MCF 10A (cell line): ENCODE measurements at regions of chr3 and their contacts with region 1.

Region 1: GRCh38 chr3:8111069-8111798 is 390.4 kb upstream of the LMCD1 start:
- DNase-seq: peak; percentile 72
- H3K4me3 Mint-ChIP-seq: no peak overlapping the region
- H3K27ac Mint-ChIP-seq: no peak overlapping the region
- H3K4me1 Mint-ChIP-seq: peaks cover 6% of the 10 kb centered on the region
- H3K27me3 Mint-ChIP-seq: no peaks in the 10 kb centered on the region
- CTCF ChIP-seq: peak; percentile 87

Region 2: DNA sequence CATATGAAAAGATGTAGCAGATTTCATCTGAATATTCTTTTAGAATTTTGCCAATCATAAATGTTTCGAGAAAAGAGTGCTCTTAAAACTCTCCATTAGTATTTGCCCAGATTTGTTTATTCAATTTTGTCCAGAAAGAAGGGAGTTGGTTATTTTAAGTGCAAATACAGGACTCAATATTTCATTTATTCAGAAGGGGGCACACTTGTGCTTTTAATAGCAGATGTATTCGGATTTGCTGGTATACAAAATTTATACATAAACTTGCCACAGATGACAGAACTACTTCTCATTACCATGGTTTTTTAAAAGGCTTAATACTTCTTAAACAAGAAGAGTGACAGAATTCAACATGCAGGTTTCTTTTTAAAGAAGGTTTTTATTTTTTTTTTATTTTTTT is 1320.1 kb before region 1 on chr3:
- CTCF ChIA-PET with region 1: no interaction called
- POLR2A ChIA-PET with region 1: no interaction called
- intact Hi-C with region 1: loop called (anchors 5 kb)
- DNase-seq: no peak
- H3K4me3 Mint-ChIP-seq: no peak overlapping the region
- H3K27ac Mint-ChIP-seq: no peak overlapping the region
- H3K4me1 Mint-ChIP-seq: no peaks in the 10 kb centered on the region
- H3K27me3 Mint-ChIP-seq: no peaks in the 10 kb centered on the region
- CTCF ChIP-seq: peak; percentile 28

Region 3: DNA sequence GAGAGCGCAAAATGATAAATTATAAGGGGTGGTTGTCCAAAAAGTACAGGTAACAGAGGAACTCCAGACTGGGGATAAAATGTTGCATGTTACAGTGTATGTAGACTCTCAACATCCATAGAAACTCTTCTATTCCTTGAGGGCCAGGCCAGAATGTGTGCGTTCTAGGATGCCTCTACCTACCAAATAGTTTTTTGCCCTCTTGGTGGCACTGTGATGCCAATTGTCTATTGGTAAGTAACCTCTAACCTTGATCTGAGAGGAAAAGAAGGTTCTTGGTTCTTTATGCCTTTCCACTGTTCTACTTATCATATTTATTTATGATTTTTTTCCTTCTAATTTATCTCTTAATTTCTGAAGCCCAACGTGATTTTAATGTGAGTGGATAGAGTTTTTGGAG is 825.7 kb before region 1 on chr3:
- CTCF ChIA-PET with region 1: interaction called, 12 read pairs
- POLR2A ChIA-PET with region 1: no interaction called
- intact Hi-C with region 1: loop called (anchors 1 kb)
- DNase-seq: peak; percentile 51
- H3K4me3 Mint-ChIP-seq: no peak overlapping the region
- H3K27ac Mint-ChIP-seq: no peak overlapping the region
- H3K4me1 Mint-ChIP-seq: peaks cover 2% of the 10 kb centered on the region
- H3K27me3 Mint-ChIP-seq: no peaks in the 10 kb centered on the region
- CTCF ChIP-seq: peak; percentile 48

Region 4: DNA sequence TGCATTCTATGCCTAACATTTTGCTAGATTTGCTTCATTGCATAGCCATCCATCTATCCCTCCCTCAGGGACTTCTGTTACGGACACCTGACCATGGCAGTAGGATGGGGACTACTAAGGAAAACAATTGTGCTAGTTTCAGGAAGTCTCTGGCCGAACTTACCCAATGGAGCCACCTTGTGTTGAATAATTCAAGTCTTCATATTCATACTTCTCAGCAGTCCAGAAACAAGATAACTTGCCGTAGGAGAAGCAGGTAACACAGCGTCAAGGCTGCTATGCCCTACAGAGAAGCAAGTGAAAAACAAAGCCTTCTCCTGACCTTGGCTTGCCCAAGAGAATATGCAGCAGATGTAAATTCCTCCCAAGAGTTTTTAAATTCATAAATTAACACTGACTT is 565.0 kb before region 1 on chr3:
- CTCF ChIA-PET with region 1: no interaction called
- POLR2A ChIA-PET with region 1: no interaction called
- intact Hi-C with region 1: loop called (anchors 2 kb)
- DNase-seq: peak; percentile 44
- H3K4me3 Mint-ChIP-seq: no peak overlapping the region
- H3K27ac Mint-ChIP-seq: no peak overlapping the region
- H3K4me1 Mint-ChIP-seq: peaks cover 6% of the 10 kb centered on the region
- H3K27me3 Mint-ChIP-seq: no peaks in the 10 kb centered on the region
- CTCF ChIP-seq: peak; percentile 34

Region 5: GRCh38 chr3:8080464-8080863 is 30.8 kb before region 1 on chr3:
- CTCF ChIA-PET with region 1: no interaction called
- POLR2A ChIA-PET with region 1: no interaction called
- intact Hi-C with region 1: no loop called
- DNase-seq: no peak
- H3K4me3 Mint-ChIP-seq: no peak overlapping the region
- H3K27ac Mint-ChIP-seq: no peak overlapping the region
- H3K4me1 Mint-ChIP-seq: no peaks in the 10 kb centered on the region
- H3K27me3 Mint-ChIP-seq: no peaks in the 10 kb centered on the region
- CTCF ChIP-seq: no peak

Region 6: GRCh38 chr3:8239718-8240695 is 128.8 kb after region 1 on chr3:
- CTCF ChIA-PET with region 1: interaction called, 20 read pairs
- POLR2A ChIA-PET with region 1: no interaction called
- intact Hi-C with region 1: loop called (anchors 1 kb)
- DNase-seq: peak; percentile 68
- H3K4me3 Mint-ChIP-seq: no peak overlapping the region
- H3K27ac Mint-ChIP-seq: no peak overlapping the region
- H3K4me1 Mint-ChIP-seq: peaks cover 10% of the 10 kb centered on the region
- H3K27me3 Mint-ChIP-seq: no peaks in the 10 kb centered on the region
- CTCF ChIP-seq: peak; percentile 90

Region 7: DNA sequence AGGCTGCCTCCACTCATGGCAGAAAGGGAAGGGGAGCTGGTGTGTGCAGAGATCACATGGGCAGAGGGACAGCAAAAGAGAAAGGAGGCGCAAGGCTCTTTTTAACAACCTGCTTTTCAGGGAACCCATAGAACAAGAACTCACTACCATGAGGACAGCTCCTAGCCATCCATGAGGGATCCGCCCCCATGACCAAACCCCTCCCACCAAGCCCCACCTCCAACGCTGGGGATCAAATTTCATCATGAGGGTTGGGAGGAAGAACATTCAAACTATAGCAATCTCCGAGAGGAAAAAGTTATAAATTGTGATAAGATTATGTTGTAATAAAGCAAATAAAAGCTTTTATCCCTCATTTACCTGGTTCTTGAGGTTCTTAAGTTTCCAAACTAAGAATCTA is 305.7 kb after region 1 on chr3:
- CTCF ChIA-PET with region 1: interaction called, 7 read pairs
- POLR2A ChIA-PET with region 1: no interaction called
- intact Hi-C with region 1: loop called (anchors 1 kb)
- DNase-seq: peak; percentile 62
- H3K4me3 Mint-ChIP-seq: peak overlapping the region; percentile 47
- H3K27ac Mint-ChIP-seq: no peak overlapping the region
- H3K4me1 Mint-ChIP-seq: peaks cover 9% of the 10 kb centered on the region
- H3K27me3 Mint-ChIP-seq: peaks cover 6% of the 10 kb centered on the region
- CTCF ChIP-seq: no peak